ENCODE measurements at regions of chr13 and their contacts with region 1.

Region 1: DNA sequence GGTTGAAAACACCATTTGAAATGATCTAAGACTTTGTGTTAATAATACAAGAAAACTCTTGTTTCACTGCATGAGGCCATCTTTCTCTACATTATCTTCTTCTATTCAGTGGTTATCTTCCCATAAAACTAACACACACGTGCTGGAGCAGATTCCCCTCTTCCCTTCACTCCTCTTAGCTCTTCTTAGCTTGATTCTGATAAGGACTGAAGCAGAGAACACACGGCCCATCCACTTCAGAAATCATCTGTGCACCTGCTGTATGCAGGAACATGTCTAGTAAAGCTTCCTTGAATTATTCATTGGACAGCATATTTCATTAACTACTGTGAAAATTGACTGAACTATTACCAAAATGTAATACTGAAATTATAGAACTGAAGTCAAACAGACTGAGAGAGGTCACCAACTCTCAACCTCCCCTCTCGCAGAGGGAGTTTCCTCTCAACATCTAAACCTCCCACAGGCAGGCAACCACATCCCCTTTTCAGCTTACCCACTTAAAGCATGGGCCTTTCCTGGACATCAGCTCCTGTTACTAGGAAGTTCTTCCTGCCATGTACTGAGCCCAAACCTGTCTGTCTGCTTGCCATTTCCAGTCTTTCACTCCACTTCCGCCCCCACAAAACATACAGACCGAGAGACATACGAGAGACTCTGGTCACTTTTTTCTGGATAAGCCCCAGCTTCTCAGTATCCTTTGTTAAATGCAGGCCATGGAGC is 113.9 kb downstream of the CRYL1 start:
- DNase-seq: peak; percentile 24
- H3K4me3 Mint-ChIP-seq: peak overlapping the region; percentile 57
- H3K27ac Mint-ChIP-seq: peak overlapping the region; percentile 78
- H3K4me1 Mint-ChIP-seq: peaks cover 27% of the 10 kb centered on the region
- H3K27me3 Mint-ChIP-seq: no peaks in the 10 kb centered on the region

Region 2: GRCh38 chr13:20197361-20197834 is 214.4 kb before region 1 on chr13:
- intact Hi-C with region 1: loop called (anchors 5 kb)
- DNase-seq: no peak
- H3K4me3 Mint-ChIP-seq: no peak overlapping the region
- H3K27ac Mint-ChIP-seq: no peak overlapping the region
- H3K4me1 Mint-ChIP-seq: peaks cover 17% of the 10 kb centered on the region
- H3K27me3 Mint-ChIP-seq: peaks cover 47% of the 10 kb centered on the region

Region 3: GRCh38 chr13:20359335-20359734 is 52.5 kb before region 1 on chr13:
- intact Hi-C with region 1: loop called (anchors 5 kb)
- DNase-seq: no peak
- H3K4me3 Mint-ChIP-seq: no peak overlapping the region
- H3K27ac Mint-ChIP-seq: no peak overlapping the region
- H3K4me1 Mint-ChIP-seq: peaks cover 8% of the 10 kb centered on the region
- H3K27me3 Mint-ChIP-seq: no peaks in the 10 kb centered on the region